Aorta (tissue), 5 donors: ENCODE measurements at regions of chr1 and their contacts with region 1.

Region 1: GRCh38 chr1:150053926-150054325 is 13.7 kb upstream of the VPS45 start:
- DNase-seq: no peak
- ATAC-seq: no peak
- H3K4me3 ChIP-seq: no peak overlapping the region
- H3K27ac ChIP-seq: no peak overlapping the region
- H3K4me1 ChIP-seq: no peaks in the 10 kb centered on the region
- H3K27me3 ChIP-seq: no peaks in the 10 kb centered on the region

Region 2: DNA sequence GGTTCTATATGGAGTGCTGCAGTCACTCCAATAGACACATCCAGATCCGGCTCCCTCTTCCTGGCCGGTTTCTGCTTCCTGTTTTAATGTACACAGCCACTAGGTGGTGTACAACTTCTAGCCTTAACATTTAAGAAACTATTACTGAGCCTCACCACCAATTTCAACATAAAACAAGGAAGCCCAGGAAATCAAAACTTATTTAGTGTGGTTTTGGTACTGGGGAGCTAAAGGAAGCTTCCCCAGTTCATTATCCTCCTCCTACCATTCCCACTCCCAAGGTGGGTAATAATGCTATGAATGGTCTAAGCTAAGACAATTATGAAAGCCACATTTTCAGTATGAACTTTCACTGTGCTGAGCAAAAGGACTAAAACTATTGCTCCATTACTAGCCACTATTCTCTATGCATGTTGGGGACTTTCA is 91.8 kb before region 1 on chr1:
- intact Hi-C with region 1: loop called (anchors 1 to 2 kb)
- DNase-seq: peak in 1 of 2 donors; percentile 50
- ATAC-seq: peak; percentile 87
- H3K4me3 ChIP-seq: no peak overlapping the region
- H3K27ac ChIP-seq: peak overlapping the region in 1 of 2 donors; percentile 37
- H3K4me1 ChIP-seq: no peaks in the 10 kb centered on the region
- H3K27me3 ChIP-seq: no peaks in the 10 kb centered on the region

Region 3: DNA sequence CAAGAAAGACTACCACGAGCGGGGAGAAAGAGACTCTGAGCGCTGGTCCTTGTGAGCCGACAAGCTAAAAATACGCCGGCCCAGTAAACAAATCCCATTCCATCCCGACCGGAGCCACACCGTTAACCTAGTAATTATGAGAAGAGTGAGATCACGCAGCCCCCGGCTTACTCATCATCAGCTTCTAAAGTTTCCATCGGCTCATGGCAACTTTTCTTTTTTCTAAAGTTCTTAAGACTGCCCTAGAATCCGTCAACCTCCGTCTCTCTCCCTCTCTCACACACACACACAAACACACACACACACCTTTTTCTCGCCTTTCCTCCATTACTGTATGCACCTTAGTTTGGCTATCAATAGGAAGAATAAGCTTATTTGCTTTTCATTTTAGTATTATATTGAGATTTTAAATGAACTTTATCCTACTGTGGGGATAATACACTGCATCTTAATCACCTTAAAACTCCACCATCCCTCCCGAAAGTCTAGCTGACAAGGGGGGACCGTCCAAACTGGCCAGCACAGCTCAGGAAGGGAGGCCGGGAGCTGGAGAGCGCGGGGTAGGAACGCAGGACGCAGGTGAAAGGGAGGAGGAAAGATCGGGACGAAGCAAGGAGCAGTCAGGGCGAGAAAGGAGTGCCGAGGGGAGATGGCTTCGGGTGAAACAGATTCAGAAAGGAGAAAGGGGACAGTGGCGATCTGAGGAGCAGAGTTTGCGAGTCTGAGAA is 44.1 kb before region 1 on chr1:
- intact Hi-C with region 1: loop called in 1 of 2 experiments (anchors 10 kb)
- DNase-seq: peak; percentile 53 to 82
- ATAC-seq: peak; percentile 58
- H3K4me3 ChIP-seq: peak overlapping the region; percentile 75 to 85
- H3K27ac ChIP-seq: peak overlapping the region; percentile 76 to 95
- H3K4me1 ChIP-seq: peaks cover 1 to 5% of the 10 kb centered on the region in 2 donors
- H3K27me3 ChIP-seq: no peaks in the 10 kb centered on the region

Region 4: DNA sequence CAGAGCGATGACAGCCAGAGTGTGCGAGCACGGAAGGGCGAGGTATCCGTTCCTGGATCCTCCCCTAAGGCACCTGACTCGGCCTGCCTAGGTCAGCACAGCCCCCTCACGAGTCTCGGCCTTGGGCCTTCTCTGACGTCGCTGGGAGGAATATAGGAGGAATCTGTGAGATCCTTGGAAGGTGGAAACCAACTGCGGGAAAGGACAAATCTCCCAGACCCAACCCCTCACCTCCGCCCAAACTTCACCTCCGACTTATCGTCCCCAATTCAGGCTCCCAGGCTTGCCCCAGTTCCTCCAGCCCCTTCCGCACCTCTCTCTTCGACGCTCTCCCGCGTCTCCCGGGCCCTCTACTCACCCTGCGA is 214.4 kb after region 1 on chr1:
- intact Hi-C with region 1: no loop called
- DNase-seq: no peak
- ATAC-seq: peak; percentile 58
- H3K4me3 ChIP-seq: peak overlapping the region; percentile 73 to 94
- H3K27ac ChIP-seq: peak overlapping the region in 1 of 2 donors; percentile 54
- H3K4me1 ChIP-seq: peaks cover 0 to 3% of the 10 kb centered on the region in 2 donors
- H3K27me3 ChIP-seq: no peaks in the 10 kb centered on the region